ENCODE measurements at regions of chr22 and their contacts with region 1.

Region 1: DNA sequence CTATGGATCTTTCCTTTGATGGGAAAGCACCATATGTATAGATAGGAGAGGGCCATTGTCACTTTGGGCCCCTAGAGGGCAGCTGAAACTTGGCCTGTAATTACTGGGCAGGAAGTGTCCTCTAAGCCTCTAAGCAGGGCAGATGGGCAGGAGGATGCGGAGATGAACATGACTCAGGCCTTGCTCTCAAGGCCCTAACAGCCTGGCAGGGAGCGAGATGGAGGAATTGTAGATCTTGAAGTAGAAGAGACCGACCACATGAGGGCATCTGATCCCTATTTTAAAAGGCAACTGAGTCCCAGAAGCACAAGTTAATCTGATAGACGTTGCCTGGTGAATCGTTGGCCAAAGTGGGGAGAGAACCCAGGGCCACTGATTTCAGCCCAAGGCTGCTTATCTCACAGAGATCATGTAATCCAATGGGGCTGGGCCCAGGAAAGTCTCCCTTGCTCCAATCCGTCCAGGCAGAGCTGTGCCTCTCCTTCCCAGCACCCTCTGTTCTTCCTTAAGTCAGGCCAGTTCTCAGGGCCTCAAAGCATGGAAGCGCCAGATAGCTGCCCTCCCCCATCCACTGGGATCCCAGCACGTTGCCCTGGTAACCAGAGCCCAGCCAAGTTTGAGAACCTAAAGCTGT is 2.5 kb upstream of the SEPTIN3 start:
- DNase-seq: peak; percentile 54
- ATAC-seq: peak; percentile 89
- H3K4me3 ChIP-seq: no peak overlapping the region
- H3K27ac ChIP-seq: no peak overlapping the region
- H3K4me1 ChIP-seq: no peaks in the 10 kb centered on the region
- H3K27me3 ChIP-seq: no peaks in the 10 kb centered on the region
- CTCF ChIP-seq: peak; percentile 39 to 69 (median 67); a peak in 5 of 6 replicates
- EP300 ChIP-seq: no peak
- POLR2A ChIP-seq: no peak
- RAD21 ChIP-seq: peak; percentile 76

Region 2: GRCh38 chr22:42070517-42071422 is 104.0 kb after region 1 on chr22 and contains the start of gene NAGA:
- CTCF ChIA-PET with region 1: interaction called, 8 read pairs
- POLR2A ChIA-PET with region 1: no interaction called
- RAD21 ChIA-PET with region 1: interaction called, 5 read pairs
- SMC1A ChIA-PET with region 1: interaction called, 3 read pairs
- in situ Hi-C with region 1: no loop called
- intact Hi-C with region 1: loop called (anchors 5 kb)
- DNase-seq: peak; percentile 91
- ATAC-seq: peak; percentile 98
- H3K4me3 ChIP-seq: peak within 1 kb of the TSS; percentile 83
- H3K27ac ChIP-seq: peak within 1 kb of the TSS; percentile 88
- H3K4me1 ChIP-seq: peaks cover 19% of the 10 kb centered on the region
- H3K27me3 ChIP-seq: no peaks in the 10 kb centered on the region
- CTCF ChIP-seq: no peak
- EP300 ChIP-seq: no peak
- POLR2A ChIP-seq: peak; percentile 86
- RAD21 ChIP-seq: no peak
- polyA plus RNA-seq, gene NAGA: 9.3 to 9.8 TPM

Region 3: GRCh38 chr22:42090596-42091454 is 124.1 kb after region 1 on chr22 and contains the start of gene NDUFA6:
- CTCF ChIA-PET with region 1: interaction called, 22 read pairs
- POLR2A ChIA-PET with region 1: interaction called, 4 read pairs
- RAD21 ChIA-PET with region 1: interaction called, 24 read pairs
- SMC1A ChIA-PET with region 1: interaction called, 15 read pairs
- in situ Hi-C with region 1: no loop called
- intact Hi-C with region 1: loop called (anchors 2 kb)
- DNase-seq: peak; percentile 99
- ATAC-seq: peak; percentile 95
- H3K4me3 ChIP-seq: peak within 1 kb of the TSS; percentile 82
- H3K27ac ChIP-seq: peak within 1 kb of the TSS; percentile 87
- H3K4me1 ChIP-seq: 0 out of 2 replicates have a peak, but pooled peaks cover 3% of the 10 kb centered on the region
- H3K27me3 ChIP-seq: no peaks in the 10 kb centered on the region
- CTCF ChIP-seq: peak; percentile 95 to 99 (median 96); a peak in 5 of 6 replicates
- EP300 ChIP-seq: no peak
- POLR2A ChIP-seq: peak; percentile 98
- RAD21 ChIP-seq: peak; percentile 84
- polyA plus RNA-seq, gene NDUFA6: 473 to 511 TPM

Region 4: DNA sequence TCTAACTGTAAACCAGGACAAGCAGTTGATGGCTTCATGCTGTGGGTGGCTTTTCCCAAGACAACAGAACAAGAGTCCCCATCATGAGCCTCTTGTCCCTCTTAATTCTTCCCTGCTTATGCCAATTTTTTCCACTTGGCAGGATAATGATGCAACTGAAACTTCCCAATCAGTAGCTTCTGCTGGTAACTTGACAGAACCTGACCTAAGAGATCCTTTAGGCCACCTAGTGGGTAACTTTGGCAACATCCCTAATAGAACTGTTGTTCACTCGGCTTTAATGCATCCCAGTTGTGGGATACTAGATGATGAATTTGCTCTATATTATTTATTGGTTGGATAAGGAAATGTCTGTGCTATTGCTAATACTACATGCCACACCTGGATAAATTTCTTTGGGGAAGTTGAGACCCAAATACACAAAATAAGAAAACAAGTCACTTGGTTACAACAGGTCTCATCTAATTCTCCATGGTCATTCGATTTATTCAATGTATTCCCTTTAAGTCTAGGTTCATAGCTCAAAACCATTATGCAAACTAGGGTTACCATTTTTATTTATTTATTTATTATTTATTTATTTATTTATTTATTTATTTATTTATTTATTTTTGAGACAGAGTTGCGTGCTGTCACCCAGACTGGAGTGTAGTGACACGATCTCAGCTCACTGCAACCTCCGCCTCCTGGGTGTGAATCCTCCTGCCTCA is 506.9 kb after region 1 on chr22:
- CTCF ChIA-PET with region 1: interaction called, 5 read pairs
- POLR2A ChIA-PET with region 1: no interaction called
- RAD21 ChIA-PET with region 1: no interaction called
- SMC1A ChIA-PET with region 1: interaction called, 3 read pairs
- in situ Hi-C with region 1: no loop called
- intact Hi-C with region 1: loop called (anchors 10 kb)
- DNase-seq: no peak
- ATAC-seq: peak; percentile 89
- H3K4me3 ChIP-seq: no peak overlapping the region
- H3K27ac ChIP-seq: no peak overlapping the region
- H3K4me1 ChIP-seq: no peaks in the 10 kb centered on the region
- H3K27me3 ChIP-seq: 0 out of 4 replicates have a peak, but pooled peaks cover 1 to 3% of the 10 kb centered on the region in 2 experiments
- CTCF ChIP-seq: peak; percentile 67 to 73 (median 70)
- EP300 ChIP-seq: no peak
- POLR2A ChIP-seq: no peak
- RAD21 ChIP-seq: peak; percentile 68

Region 5: GRCh38 chr22:42880815-42881214 is 914.1 kb after region 1 on chr22:
- CTCF ChIA-PET with region 1: no interaction called
- POLR2A ChIA-PET with region 1: no interaction called
- RAD21 ChIA-PET with region 1: no interaction called
- SMC1A ChIA-PET with region 1: no interaction called
- in situ Hi-C with region 1: no loop called
- intact Hi-C with region 1: no loop called
- DNase-seq: no peak
- ATAC-seq: no peak
- H3K4me3 ChIP-seq: no peak overlapping the region
- H3K27ac ChIP-seq: no peak overlapping the region
- H3K4me1 ChIP-seq: no peaks in the 10 kb centered on the region
- H3K27me3 ChIP-seq: no peaks in the 10 kb centered on the region
- CTCF ChIP-seq: 0 out of 6 replicates have a peak, but pooled peaks of 1 of the 3 experiments have one; percentile 14
- EP300 ChIP-seq: no peak
- POLR2A ChIP-seq: no peak
- RAD21 ChIP-seq: no peak

Measured in GM12878 (cell line).